IMR-90 (cell line): ENCODE measurements at regions of chr14 and their contacts with region 1.

Region 1: DNA sequence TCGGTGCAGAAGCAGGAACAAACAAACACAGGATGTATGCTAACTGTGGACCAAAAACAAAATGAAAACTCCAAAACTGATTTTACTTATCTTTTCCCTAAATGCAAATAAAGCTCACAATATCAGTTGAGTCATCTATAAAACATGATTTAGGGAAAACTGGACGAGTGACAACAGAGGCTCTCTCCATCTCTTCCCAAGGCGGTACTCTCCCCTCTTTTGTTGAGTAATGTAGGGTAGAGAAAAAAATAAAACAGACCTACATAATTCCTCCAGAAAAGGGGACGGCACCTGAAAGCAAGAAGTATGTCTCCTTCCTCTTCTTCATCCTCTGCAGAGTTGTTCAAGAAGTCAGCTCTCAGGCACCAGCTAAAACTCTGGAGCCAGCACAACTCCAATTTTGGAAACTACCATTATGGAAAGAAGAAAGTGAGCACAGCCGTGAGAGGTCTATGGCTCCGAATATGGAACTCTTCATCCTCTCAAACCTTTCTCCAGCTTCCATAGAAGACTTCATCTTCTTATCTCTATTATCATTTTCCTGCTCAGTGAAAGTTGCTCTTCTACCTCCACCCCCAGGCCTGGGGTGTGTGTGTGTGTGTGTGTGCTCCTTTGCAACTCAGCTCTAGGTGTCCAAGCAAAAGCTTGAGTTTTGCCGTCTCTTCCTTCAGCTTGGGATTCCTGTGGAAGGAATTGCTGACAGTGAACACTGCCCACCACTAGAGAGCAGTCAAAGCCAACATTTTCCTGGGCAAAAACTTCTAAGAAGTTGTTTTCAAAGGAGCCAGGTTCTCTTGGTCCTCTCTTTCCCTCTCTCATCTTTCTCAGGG is 155.4 kb downstream of the DIO2 start:
- DNase-seq: peak; percentile 78
- ATAC-seq: peak; percentile 80
- H3K4me3 ChIP-seq: no peak overlapping the region
- H3K27ac ChIP-seq: no peak overlapping the region
- H3K4me1 ChIP-seq: no peaks in the 10 kb centered on the region; the same call in 1 of the 2 replicates
- H3K27me3 ChIP-seq: no peaks in the 10 kb centered on the region
- CTCF ChIP-seq: peak; percentile 87
- POLR2A ChIP-seq: no peak
- RAD21 ChIP-seq: peak; percentile 94

Region 2: DNA sequence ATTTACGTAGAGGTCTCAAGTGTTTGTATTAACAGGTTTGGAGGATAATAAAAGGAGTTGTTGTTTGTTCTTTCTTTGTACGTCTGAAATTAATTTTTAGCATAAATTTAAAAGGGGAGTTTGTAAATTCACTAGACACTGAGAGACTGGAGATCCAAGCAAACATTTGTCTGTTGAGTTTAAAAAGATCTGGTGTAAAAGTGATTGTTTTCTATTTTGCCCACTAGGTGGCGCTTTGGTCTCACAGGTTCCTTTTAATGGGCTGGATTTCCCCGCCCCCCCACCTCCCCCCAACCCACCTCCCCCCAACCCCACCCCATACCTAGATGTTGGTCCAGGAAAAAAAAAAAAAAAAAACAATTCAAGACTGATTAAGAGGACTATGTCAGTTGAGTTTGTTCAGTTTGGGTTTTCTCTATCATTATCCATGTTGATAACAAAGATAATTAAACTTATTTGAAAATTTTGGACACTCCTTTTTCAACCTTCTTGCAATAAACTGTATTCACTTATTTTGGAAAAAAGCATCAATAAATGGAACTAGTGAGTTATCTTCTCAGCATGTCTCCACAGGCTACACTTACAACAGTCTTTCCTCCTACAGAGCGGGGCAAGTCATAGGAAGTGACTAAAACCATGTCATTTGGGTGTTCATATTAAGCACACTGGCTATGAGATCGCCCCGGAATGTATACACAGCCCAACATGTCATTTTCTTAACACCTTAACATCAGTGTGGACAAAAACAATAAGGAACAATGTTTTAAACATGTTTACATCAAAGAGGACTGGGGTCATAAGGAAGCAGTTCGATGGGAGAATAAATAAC is 1044.6 kb before region 1 on chr14:
- CTCF ChIA-PET with region 1: no interaction called
- POLR2A ChIA-PET with region 1: no interaction called
- dilution Hi-C with region 1: no loop called
- in situ Hi-C with region 1: loop called (anchors 10 kb)
- intact Hi-C with region 1: loop called (anchors 1 kb)
- DNase-seq: peak; percentile 84
- ATAC-seq: peak; percentile 86
- H3K4me3 ChIP-seq: no peak overlapping the region
- H3K27ac ChIP-seq: no peak overlapping the region
- H3K4me1 ChIP-seq: no peaks in the 10 kb centered on the region; the same call in 1 of the 2 replicates
- H3K27me3 ChIP-seq: no peaks in the 10 kb centered on the region
- CTCF ChIP-seq: peak; percentile 56
- POLR2A ChIP-seq: no peak
- RAD21 ChIP-seq: peak; percentile 63

Region 3: GRCh38 chr14:80150301-80150700 is 94.4 kb after region 1 on chr14:
- CTCF ChIA-PET with region 1: no interaction called
- POLR2A ChIA-PET with region 1: no interaction called
- dilution Hi-C with region 1: no loop called
- in situ Hi-C with region 1: no loop called
- intact Hi-C with region 1: no loop called
- DNase-seq: peak; percentile 23
- ATAC-seq: no peak
- H3K4me3 ChIP-seq: no peak overlapping the region
- H3K27ac ChIP-seq: no peak overlapping the region
- H3K4me1 ChIP-seq: no peaks in the 10 kb centered on the region
- H3K27me3 ChIP-seq: no peaks in the 10 kb centered on the region
- CTCF ChIP-seq: no peak
- POLR2A ChIP-seq: no peak
- RAD21 ChIP-seq: no peak

Region 4: DNA sequence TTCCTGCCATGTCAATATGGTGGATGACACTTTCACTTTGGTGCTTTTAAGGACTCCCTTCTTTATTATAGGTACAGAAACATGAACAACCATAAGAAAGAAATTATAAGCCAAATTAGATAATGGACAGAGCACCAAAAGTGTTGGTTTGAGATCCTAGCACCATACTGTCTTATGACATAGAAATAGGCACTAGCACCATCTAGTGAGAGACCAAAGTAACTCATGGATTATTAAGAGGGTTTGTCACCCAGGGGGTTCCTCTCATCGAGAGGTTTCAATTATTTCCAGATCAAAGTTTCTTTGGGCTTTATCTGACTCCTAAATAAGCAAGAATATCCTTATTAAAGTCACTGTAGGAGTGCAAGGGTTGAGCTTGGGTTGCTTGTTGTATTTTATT is 308.4 kb after region 1 on chr14:
- CTCF ChIA-PET with region 1: interaction called, 4 read pairs
- POLR2A ChIA-PET with region 1: no interaction called
- dilution Hi-C with region 1: no loop called
- in situ Hi-C with region 1: no loop called
- intact Hi-C with region 1: loop called (anchors 2 kb)
- DNase-seq: peak; percentile 21
- ATAC-seq: no peak
- H3K4me3 ChIP-seq: no peak overlapping the region
- H3K27ac ChIP-seq: no peak overlapping the region
- H3K4me1 ChIP-seq: no peaks in the 10 kb centered on the region
- H3K27me3 ChIP-seq: no peaks in the 10 kb centered on the region
- CTCF ChIP-seq: peak; percentile 35
- POLR2A ChIP-seq: no peak
- RAD21 ChIP-seq: peak; percentile 34; the same call in 1 of the 2 replicates

Region 5: DNA sequence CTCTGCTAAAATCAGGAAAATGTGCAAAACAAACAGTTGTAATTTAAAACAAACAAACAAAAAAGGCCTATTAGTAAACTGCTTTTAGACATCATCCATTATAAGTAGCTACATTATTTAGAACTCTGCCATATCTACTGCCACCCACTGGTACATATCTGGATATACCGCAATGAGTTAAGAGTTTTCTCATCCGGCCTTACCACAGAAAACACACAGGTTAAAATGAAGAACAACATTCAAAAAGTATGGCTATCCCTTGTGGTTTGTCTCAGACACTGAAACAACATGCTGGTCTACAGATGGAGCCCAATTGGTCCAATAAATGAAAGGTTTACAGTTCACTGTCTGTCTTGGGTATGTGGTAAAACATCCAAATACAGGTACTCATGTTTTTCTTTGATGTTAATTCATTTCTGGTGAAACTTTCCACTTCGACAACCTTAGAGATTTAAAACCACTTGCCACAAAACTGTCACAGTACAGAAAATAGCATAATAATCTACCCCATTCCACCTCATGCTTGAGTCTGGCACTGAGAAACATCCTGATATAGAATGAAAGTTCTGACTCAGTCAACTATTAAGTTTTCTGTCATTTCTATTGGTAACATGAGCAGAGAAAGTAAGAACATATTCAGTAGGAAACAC is 531.3 kb after region 1 on chr14:
- CTCF ChIA-PET with region 1: interaction called, 4 read pairs
- POLR2A ChIA-PET with region 1: no interaction called
- dilution Hi-C with region 1: no loop called
- in situ Hi-C with region 1: no loop called
- intact Hi-C with region 1: loop called (anchors 1 kb)
- DNase-seq: peak; percentile 48
- ATAC-seq: peak; percentile 74; the same call in 1 of the 2 replicates
- H3K4me3 ChIP-seq: no peak overlapping the region
- H3K27ac ChIP-seq: no peak overlapping the region
- H3K4me1 ChIP-seq: peaks cover 1% of the 10 kb centered on the region; the same call in 1 of the 2 replicates
- H3K27me3 ChIP-seq: no peaks in the 10 kb centered on the region
- CTCF ChIP-seq: peak; percentile 54
- POLR2A ChIP-seq: no peak
- RAD21 ChIP-seq: peak; percentile 59

Region 6: GRCh38 chr14:80784820-80785219 is 728.9 kb after region 1 on chr14:
- CTCF ChIA-PET with region 1: no interaction called
- POLR2A ChIA-PET with region 1: no interaction called
- dilution Hi-C with region 1: no loop called
- in situ Hi-C with region 1: no loop called
- intact Hi-C with region 1: loop called (anchors 2 kb)
- DNase-seq: peak; percentile 49
- ATAC-seq: peak; percentile 77
- H3K4me3 ChIP-seq: no peak overlapping the region
- H3K27ac ChIP-seq: no peak overlapping the region
- H3K4me1 ChIP-seq: peaks cover 3% of the 10 kb centered on the region
- H3K27me3 ChIP-seq: no peaks in the 10 kb centered on the region
- CTCF ChIP-seq: peak; percentile 44; the same call in 1 of the 2 replicates
- POLR2A ChIP-seq: no peak
- RAD21 ChIP-seq: peak; percentile 49